ENCODE measurements at regions of chr11 and their contacts with region 1.

Region 1: DNA sequence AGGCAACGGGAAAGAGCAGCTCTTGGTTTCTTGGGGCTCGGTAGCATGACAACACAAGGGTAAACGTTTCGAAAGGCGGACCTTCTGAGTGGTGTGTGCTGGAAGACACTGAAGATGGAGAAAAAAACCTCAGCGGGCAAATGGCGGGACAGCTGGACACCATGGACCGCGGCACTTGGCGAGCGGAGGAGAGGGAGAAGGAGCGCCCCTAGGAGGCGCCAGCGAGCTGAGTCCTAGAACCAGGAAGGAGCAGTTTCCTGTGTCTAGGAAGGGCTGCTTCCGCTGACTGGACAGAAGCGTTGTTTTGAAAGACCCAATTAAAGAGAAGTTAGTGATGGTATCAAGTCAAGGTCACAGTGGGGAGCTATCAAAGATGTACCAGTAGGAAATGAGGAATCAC is 44.0 kb upstream of the OPCML start:
- DNase-seq: no peak
- H3K4me3 ChIP-seq: no peak overlapping the region
- H3K27ac ChIP-seq: no peak overlapping the region
- H3K4me1 ChIP-seq: no peaks in the 10 kb centered on the region
- H3K27me3 ChIP-seq: no peaks in the 10 kb centered on the region
- CTCF ChIP-seq: no peak

Region 2: DNA sequence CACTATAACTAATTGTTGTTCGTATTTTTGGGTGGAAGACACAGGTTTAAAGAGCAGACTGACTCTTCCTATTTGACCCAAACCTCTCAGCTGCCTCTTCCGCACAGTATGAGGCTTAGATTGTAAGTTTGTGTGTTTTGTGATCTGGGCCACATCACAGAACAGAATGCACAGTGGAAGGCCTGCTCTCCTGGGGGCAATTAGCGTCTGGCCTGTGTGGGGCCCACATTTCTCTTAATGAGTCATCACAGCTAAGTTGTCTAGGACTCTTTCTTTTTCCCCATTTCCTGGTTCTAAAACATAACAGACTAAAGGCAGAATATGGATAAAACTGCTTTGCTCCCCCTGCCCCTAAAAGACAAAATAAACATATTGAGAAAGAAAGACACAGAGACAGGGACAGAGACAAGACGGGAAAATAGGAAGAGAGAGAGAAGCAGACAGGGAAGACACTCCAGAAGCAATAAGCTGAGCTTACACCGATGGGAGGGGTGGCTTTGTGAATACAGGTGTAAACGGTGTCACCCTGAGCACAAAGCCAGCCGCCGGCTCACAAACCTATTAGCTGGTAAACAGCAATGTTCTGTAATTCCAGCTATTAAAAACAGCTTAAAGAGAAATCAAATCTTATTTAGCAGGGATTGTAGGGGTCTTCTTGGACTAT is 83.3 kb after region 1 on chr11:
- CTCF ChIA-PET with region 1: no interaction called
- dilution Hi-C with region 1: loop called (anchors 5 kb)
- in situ Hi-C with region 1: no loop called
- intact Hi-C with region 1: no loop called
- DNase-seq: no peak
- H3K4me3 ChIP-seq: no peak overlapping the region
- H3K27ac ChIP-seq: no peak overlapping the region
- H3K4me1 ChIP-seq: no peaks in the 10 kb centered on the region
- H3K27me3 ChIP-seq: no peaks in the 10 kb centered on the region
- CTCF ChIP-seq: no peak

Region 3: GRCh38 chr11:133821776-133822175 is 245.4 kb after region 1 on chr11:
- CTCF ChIA-PET with region 1: no interaction called
- dilution Hi-C with region 1: no loop called
- in situ Hi-C with region 1: no loop called
- intact Hi-C with region 1: no loop called
- DNase-seq: no peak
- H3K4me3 ChIP-seq: no peak overlapping the region
- H3K27ac ChIP-seq: no peak overlapping the region
- H3K4me1 ChIP-seq: no peaks in the 10 kb centered on the region
- H3K27me3 ChIP-seq: no peaks in the 10 kb centered on the region
- CTCF ChIP-seq: peak; percentile 51 to 61

Measured in mammary epithelial cell (primary cell).